HCT116 (cell line): ENCODE measurements at regions of chr14 and their contacts with region 1.

Region 1: DNA sequence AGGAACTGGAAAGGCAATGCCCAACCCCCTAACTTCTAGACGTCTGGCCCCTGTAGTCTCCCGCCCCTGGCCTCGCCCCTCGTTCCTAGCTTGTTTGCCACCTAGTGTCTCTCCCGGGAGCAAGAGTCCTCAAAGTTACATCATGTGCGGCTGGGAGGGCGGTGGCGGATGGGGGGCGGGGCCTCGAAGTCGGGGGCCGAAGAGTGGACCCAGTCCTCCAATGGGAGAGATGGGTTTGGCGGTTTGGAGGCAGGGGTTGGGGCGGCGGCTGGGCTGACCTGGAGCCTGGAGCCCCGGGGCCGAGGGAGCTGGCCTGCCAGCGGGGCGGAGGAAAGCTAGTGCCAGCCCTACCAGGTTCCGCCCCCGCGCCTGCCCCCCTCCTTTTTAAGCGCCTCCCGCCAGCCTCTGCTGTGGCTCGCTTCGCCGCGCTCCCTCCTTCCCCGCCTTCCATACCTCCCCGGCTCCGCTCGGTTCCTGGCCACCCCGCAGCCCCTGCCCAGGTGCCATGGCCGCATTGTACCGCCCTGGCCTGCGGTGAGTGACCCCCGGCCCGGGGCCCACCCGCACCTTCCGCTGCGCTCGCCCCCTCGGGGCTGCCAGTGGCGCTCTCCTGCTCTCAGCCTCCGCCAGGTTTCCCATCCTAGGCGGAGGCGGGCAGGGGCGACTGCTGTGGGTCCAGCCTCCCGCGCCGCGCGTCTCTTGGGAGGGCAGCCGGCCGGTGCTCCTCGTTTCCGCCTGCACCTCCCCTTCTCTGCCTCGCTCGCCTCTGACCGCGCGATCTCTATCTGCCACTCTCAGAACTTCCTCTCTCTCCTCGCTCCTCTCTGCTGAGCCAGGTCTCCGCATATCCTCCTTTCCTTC is at the start of gene PCK2:
- DNase-seq: peak; percentile 85
- ATAC-seq: peak; percentile 91
- H3K4me3 ChIP-seq: peak within 1 kb of the TSS; percentile 94 to 96
- H3K27ac ChIP-seq: peak within 1 kb of the TSS; percentile 87
- H3K4me1 ChIP-seq: peaks cover 15 to 22% of the 10 kb centered on the region in 2 experiments
- H3K27me3 ChIP-seq: no peaks in the 10 kb centered on the region
- CTCF ChIP-seq: no peak
- POLR2A ChIP-seq: peak; percentile 98
- RAD21 ChIP-seq: no peak
- total RNA-seq, gene PCK2: 94.1 TPM

Region 2: GRCh38 chr14:24058260-24058950 is 35.7 kb before region 1 on chr14:
- CTCF ChIA-PET with region 1: interaction called, 149 read pairs
- POLR2A ChIA-PET with region 1: interaction called, 38 read pairs
- RAD21 ChIA-PET with region 1: interaction called, 29 to 35 read pairs
- intact Hi-C with region 1: loop called (anchors 1 kb)
- DNase-seq: no peak
- ATAC-seq: peak; percentile 92
- H3K4me3 ChIP-seq: no peak overlapping the region
- H3K27ac ChIP-seq: no peak overlapping the region
- H3K4me1 ChIP-seq: peaks cover 0 to 3% of the 10 kb centered on the region in 2 experiments; a peak in 1 of 4 replicates
- H3K27me3 ChIP-seq: no peaks in the 10 kb centered on the region
- CTCF ChIP-seq: peak; percentile 72 to 89 (median 87); a peak in 5 of 6 replicates
- POLR2A ChIP-seq: no peak
- RAD21 ChIP-seq: peak; percentile 95

Region 3: DNA sequence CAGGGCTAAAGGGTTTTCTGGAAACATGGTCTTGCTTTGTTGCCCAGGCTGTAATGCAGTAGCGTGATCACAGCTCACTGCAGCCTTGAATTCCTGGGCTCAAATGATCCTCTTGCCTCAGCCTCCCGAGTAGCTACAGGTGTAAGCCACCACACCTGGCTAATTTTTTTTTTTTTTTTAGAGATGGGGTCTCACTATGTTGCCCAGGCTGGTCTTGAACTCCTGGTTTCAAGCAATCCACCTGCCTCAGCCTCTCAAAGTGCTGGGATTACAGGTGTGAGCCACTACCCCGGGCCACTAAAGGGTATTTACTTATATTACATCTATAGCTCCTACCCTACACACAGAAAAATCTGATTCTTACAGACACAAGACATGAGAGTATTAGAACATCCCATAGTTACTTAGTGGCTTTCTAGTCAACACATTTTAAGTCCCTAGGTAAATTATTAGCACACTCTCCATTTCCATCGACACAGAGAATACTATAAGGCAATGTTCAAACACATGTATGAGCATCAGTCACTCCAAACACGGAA is 14.3 kb after region 1 on chr14:
- CTCF ChIA-PET with region 1: interaction called, 73 read pairs
- POLR2A ChIA-PET with region 1: interaction called, 49 read pairs
- RAD21 ChIA-PET with region 1: interaction called, 6 to 8 read pairs
- intact Hi-C with region 1: no loop called
- DNase-seq: no peak
- ATAC-seq: no peak; the same call in 1 of the 2 replicates
- H3K4me3 ChIP-seq: no peak overlapping the region
- H3K27ac ChIP-seq: no peak overlapping the region
- H3K4me1 ChIP-seq: peaks cover 2 to 9% of the 10 kb centered on the region in 2 experiments; a peak in 3 of 4 replicates
- H3K27me3 ChIP-seq: no peaks in the 10 kb centered on the region
- CTCF ChIP-seq: no peak
- POLR2A ChIP-seq: no peak
- RAD21 ChIP-seq: no peak

Region 4: GRCh38 chr14:24135834-24136542 is 41.9 kb after region 1 on chr14 and contains the start of gene PSME1:
- CTCF ChIA-PET with region 1: no interaction called
- POLR2A ChIA-PET with region 1: interaction called, 11 read pairs
- RAD21 ChIA-PET with region 1: no interaction called
- intact Hi-C with region 1: no loop called
- DNase-seq: peak; percentile 71
- ATAC-seq: peak; percentile 92
- H3K4me3 ChIP-seq: peak within 1 kb of the TSS; percentile 71 to 94
- H3K27ac ChIP-seq: peak within 1 kb of the TSS; percentile 96
- H3K4me1 ChIP-seq: peaks cover 20 to 38% of the 10 kb centered on the region in 2 experiments
- H3K27me3 ChIP-seq: no peaks in the 10 kb centered on the region
- CTCF ChIP-seq: no peak
- POLR2A ChIP-seq: peak; percentile 70
- RAD21 ChIP-seq: no peak
- total RNA-seq, gene PSME1: 174 TPM

Region 5: DNA sequence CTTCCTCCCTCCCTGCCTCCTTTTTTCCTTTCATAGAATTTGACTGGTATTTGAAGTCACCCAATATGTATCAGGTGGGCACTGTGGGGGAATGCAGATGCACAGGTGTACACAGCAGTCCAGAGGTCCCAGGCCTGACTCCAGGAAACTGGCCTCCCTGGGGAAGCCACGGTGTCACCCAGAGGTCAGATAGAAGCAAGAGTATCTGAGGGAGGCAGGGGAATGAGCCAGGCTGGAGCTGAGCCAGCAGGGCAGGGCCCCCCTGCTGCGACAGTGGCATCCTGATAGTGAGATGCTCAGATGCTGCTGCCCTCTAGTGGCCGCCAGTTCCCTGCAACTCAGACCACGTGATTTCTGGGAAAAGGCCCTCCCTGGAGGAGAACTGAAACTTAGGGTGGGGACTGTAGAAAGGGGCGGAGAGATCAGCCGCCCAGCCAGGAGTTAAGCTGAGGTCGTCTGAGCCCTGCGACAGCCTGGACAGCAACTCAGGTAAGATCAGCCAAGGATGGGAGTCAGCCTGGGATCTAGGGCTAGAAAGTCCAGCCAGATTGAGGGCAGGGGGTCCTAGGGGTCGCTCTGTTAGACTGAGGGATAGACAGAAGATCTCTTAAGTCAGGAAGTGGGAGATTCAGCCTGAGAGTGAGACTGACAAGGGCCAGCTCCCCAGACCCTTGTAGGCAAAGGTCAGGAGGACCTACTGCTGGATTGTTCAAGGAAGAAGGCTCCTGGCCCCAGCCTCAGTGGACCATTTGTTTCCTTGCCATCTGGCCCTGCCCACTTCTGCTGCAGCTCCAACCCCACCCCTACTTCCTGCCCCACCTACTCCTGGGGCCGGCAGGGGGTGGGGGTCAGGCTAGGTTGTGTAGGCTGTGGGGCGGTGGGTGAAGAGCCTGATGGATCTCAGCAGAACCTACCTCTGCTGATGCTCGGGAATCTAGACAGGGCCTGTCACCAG is 67.0 kb after region 1 on chr14 and contains the start of gene IRF9:
- CTCF ChIA-PET with region 1: interaction called, 10 read pairs
- POLR2A ChIA-PET with region 1: interaction called, 9 read pairs
- RAD21 ChIA-PET with region 1: no interaction called
- intact Hi-C with region 1: no loop called
- DNase-seq: peak; percentile 89
- ATAC-seq: peak; percentile 95
- H3K4me3 ChIP-seq: peak within 1 kb of the TSS; percentile 58 to 60
- H3K27ac ChIP-seq: peak within 1 kb of the TSS; percentile 84
- H3K4me1 ChIP-seq: peaks cover 15 to 21% of the 10 kb centered on the region in 2 experiments
- H3K27me3 ChIP-seq: no peaks in the 10 kb centered on the region
- CTCF ChIP-seq: peak; percentile 77 to 94 (median 87)
- POLR2A ChIP-seq: peak; percentile 53
- RAD21 ChIP-seq: peak; percentile 85
- total RNA-seq, gene IRF9: 21.7 TPM